Stomach (tissue), 19 donors: ENCODE measurements at regions of chr12 and their contacts with region 1.

Region 1: GRCh38 chr12:44929236-44929885 is 53.2 kb upstream of the NELL2 start:
- DNase-seq: peak in 1 of 2 donors; percentile 5
- H3K4me3 ChIP-seq: no peak overlapping the region
- H3K27ac ChIP-seq: no peak overlapping the region
- H3K4me1 ChIP-seq: peaks cover 0 to 4% (median 0%) of the 10 kb centered on the region in 4 donors
- H3K27me3 ChIP-seq: no peaks in the 10 kb centered on the region
- CTCF ChIP-seq: no peak
- EP300 ChIP-seq: no peak
- POLR2A ChIP-seq: no peak

Region 2: GRCh38 chr12:44015335-44015941 is 913.9 kb before region 1 on chr12:
- intact Hi-C with region 1: loop called (anchors 10 kb)
- DNase-seq: peak in 1 of 2 donors; percentile 79
- H3K4me3 ChIP-seq: no peak overlapping the region
- H3K27ac ChIP-seq: no peak overlapping the region
- H3K4me1 ChIP-seq: peaks cover 0 to 3% (median 0%) of the 10 kb centered on the region in 4 donors
- H3K27me3 ChIP-seq: no peaks in the 10 kb centered on the region
- CTCF ChIP-seq: peak in 5 of 7 experiments; percentile 11 to 52 (median 33)
- EP300 ChIP-seq: no peak
- POLR2A ChIP-seq: no peak